Activated T-helper 1 cell treated with anti-CD3 and anti-CD28 coated beads, Interleukin-12 subunit alpha, Interleukin-12 subunit beta, Interleukin-2, Interleukin-4 antibody, amounts not matched to agents 30 ng/mL and 10 ng/mL and 1 ng/mL, durations not matched to agents 14 hours and 24 hours and 36 hours (primary cell): ENCODE measurements at regions of chr17 and their contacts with region 1.

Region 1: DNA sequence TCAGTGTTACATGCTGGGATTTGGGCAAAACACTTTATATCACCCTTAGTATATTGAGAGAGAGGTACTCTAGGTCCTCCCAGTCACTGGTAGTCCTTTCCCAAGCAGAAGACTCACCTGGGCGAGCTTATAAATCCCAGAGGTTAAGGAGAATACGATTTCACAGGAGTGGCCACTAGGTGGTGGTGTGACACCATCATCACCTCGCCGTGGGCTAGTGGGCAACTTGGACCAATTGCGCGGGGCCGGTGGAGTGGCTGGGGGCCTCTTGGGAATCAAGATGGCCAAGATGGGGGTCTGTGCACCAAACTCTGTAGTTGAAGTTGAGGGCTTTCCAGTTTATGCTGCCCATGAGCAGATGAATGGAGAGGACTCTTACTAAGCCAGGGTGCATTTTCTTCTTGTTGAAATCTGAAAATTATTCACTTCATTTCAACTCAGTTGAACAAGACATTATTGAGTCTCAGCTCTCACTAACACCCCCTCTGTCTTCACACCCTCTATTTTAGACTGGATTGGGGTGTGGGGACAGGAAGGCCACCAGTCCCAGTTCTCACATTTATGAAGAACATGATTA is 38.2 kb upstream of the PIRT start:
- DNase-seq: no peak
- H3K4me3 Mint-ChIP-seq: no peak overlapping the region
- H3K27ac Mint-ChIP-seq: no peak overlapping the region
- H3K4me1 Mint-ChIP-seq: no peaks in the 10 kb centered on the region
- H3K27me3 Mint-ChIP-seq: no peaks in the 10 kb centered on the region

Region 2: GRCh38 chr17:11144358-11145233 is 268.5 kb after region 1 on chr17:
- intact Hi-C with region 1: loop called (anchors 5 kb)
- DNase-seq: no peak
- H3K4me3 Mint-ChIP-seq: no peak overlapping the region
- H3K27ac Mint-ChIP-seq: no peak overlapping the region
- H3K4me1 Mint-ChIP-seq: no peaks in the 10 kb centered on the region
- H3K27me3 Mint-ChIP-seq: no peaks in the 10 kb centered on the region

Region 3: GRCh38 chr17:11296994-11297393 is 420.9 kb after region 1 on chr17:
- intact Hi-C with region 1: loop called (anchors 10 kb)
- DNase-seq: no peak
- H3K4me3 Mint-ChIP-seq: no peak overlapping the region
- H3K27ac Mint-ChIP-seq: no peak overlapping the region
- H3K4me1 Mint-ChIP-seq: no peaks in the 10 kb centered on the region
- H3K27me3 Mint-ChIP-seq: no peaks in the 10 kb centered on the region

Region 4: GRCh38 chr17:11644261-11645212 is 768.5 kb after region 1 on chr17:
- intact Hi-C with region 1: loop called (anchors 5 kb)
- DNase-seq: peak; percentile 11
- H3K4me3 Mint-ChIP-seq: no peak overlapping the region
- H3K27ac Mint-ChIP-seq: no peak overlapping the region
- H3K4me1 Mint-ChIP-seq: no peaks in the 10 kb centered on the region
- H3K27me3 Mint-ChIP-seq: no peaks in the 10 kb centered on the region

Region 5: GRCh38 chr17:11935734-11936406 is 1059.8 kb after region 1 on chr17:
- intact Hi-C with region 1: loop called (anchors 5 kb)
- DNase-seq: no peak
- H3K4me3 Mint-ChIP-seq: no peak overlapping the region
- H3K27ac Mint-ChIP-seq: no peak overlapping the region
- H3K4me1 Mint-ChIP-seq: no peaks in the 10 kb centered on the region
- H3K27me3 Mint-ChIP-seq: no peaks in the 10 kb centered on the region